BJ (cell line): ENCODE measurements at regions of chr13 and their contacts with region 1.

Region 1: DNA sequence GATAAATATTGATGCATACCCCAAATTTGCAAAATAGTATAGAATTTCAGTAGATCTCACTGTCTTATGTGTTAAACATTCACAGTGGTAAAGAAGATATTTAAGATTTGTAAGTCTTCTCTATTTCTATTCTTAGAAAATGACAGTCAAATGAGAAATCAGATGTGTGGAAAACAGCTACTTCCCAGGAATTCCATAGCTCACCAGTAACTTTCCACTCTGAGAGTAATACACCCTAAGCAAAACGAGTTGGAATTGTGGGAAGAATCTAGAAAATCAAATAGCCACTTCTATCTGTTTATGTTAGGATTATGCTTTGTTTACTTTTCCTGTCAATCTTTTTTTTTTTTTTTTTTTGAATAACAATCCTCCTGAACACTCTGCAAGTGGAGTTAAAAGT is 69.1 kb downstream of the FLT1 start:
- DNase-seq: no peak
- H3K4me3 ChIP-seq: no peak overlapping the region
- H3K27me3 ChIP-seq: no peaks in the 10 kb centered on the region
- CTCF ChIP-seq: no peak

Region 2: DNA sequence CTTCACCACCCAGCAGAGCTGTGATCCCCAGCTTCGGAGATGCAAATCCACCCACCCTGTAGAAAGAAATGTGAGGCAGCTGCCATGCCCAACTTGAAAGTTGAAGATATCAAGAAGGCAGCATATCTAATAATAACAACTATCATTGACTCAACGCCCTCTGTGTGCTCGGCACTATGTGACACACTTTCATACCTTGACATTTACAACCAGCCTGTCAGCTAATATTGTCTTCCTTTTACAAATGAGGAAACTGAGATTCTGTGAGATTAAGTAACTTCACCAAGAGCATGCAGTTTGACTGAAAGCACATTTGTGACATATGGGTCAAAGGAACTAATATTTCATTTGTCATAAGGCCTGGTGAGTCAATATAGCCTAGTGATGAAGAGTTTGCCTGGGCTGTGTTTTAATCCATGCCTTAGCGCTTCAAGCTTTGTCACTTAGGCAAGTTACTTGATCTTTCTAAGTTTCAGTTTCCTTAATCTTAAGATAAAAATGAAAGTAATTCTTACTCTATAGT is 67.8 kb before region 1 on chr13:
- CTCF ChIA-PET with region 1: no interaction called
- POLR2A ChIA-PET with region 1: interaction called, 27 read pairs
- DNase-seq: no peak
- H3K4me3 ChIP-seq: no peak overlapping the region
- H3K27me3 ChIP-seq: no peaks in the 10 kb centered on the region
- CTCF ChIP-seq: no peak

Region 3: GRCh38 chr13:28609926-28610325 is 184.1 kb after region 1 on chr13:
- CTCF ChIA-PET with region 1: no interaction called
- POLR2A ChIA-PET with region 1: interaction called, 11 read pairs
- DNase-seq: peak; percentile 77
- H3K4me3 ChIP-seq: no peak overlapping the region
- H3K27me3 ChIP-seq: no peaks in the 10 kb centered on the region
- CTCF ChIP-seq: no peak